Panc1 (cell line): ENCODE measurements at regions of chr4 and their contacts with region 1.

Region 1: DNA sequence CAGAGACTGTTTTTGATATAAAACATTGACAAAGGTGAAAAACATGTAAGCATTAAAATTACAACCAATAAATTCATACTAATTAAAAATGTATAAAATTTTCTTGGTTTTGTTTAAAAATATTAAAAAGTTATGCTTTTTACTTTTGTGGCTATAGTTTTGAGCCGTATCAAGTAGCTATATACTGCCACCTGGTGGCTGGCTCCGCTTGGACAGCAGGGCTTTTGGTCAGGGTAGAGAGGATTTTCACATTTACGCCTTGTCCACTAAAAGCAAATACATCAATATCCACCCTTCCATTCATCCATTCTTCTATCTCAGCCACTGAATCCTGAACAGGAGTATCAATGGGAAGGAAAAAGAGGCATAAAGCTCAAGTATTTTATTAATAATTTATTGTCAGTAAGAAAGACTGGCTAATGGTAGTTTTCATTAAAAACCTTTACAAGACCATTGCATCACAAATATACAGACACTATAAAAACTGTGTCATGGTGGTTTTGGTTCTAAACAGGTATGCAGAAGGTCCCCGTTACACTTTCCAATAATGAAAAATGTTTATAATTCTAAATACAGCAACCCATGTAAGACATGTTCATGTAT is 32.1 kb upstream of the MTNR1A start:
- DNase-seq: peak; percentile 12
- ATAC-seq: peak; percentile 81; the same call in 1 of the 2 replicates
- H3K4me3 ChIP-seq: no peak overlapping the region
- H3K27ac ChIP-seq: no peak overlapping the region
- H3K4me1 ChIP-seq: no peaks in the 10 kb centered on the region; the same call in 1 of the 2 replicates
- H3K27me3 ChIP-seq: no peaks in the 10 kb centered on the region
- CTCF ChIP-seq: peak; percentile 79

Region 2: GRCh38 chr4:186297013-186297645 is 290.4 kb before region 1 on chr4:
- CTCF ChIA-PET with region 1: no interaction called
- POLR2A ChIA-PET with region 1: no interaction called
- in situ Hi-C with region 1: no loop called
- intact Hi-C with region 1: loop called (anchors 1 kb)
- DNase-seq: peak; percentile 41
- ATAC-seq: no peak; the same call in 1 of the 2 replicates
- H3K4me3 ChIP-seq: no peak overlapping the region
- H3K27ac ChIP-seq: no peak overlapping the region
- H3K4me1 ChIP-seq: no peaks in the 10 kb centered on the region
- H3K27me3 ChIP-seq: no peaks in the 10 kb centered on the region
- CTCF ChIP-seq: peak; percentile 65; the same call in 1 of the 2 replicates

Region 3: DNA sequence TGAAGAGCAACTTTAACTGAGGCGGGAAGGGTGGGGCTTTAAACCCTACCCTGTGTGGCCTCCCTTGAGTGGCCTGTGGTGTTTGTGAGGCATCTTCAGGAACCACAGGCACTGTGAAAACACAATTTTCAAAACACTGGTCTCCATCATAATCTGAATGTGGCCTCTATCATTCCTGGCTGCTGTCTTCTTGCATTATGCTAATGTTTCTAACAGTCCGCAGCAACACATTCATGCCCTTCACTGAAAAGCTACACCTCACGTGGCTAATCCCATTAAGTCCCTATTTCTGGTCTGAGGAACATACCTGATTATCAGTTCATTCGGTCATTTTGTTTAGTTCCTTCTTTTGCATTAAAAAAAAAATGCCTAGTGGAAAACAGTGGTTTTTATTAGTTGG is 227.0 kb before region 1 on chr4:
- CTCF ChIA-PET with region 1: no interaction called
- POLR2A ChIA-PET with region 1: no interaction called
- in situ Hi-C with region 1: no loop called
- intact Hi-C with region 1: no loop called
- DNase-seq: no peak
- ATAC-seq: no peak
- H3K4me3 ChIP-seq: no peak overlapping the region
- H3K27ac ChIP-seq: no peak overlapping the region
- H3K4me1 ChIP-seq: no peaks in the 10 kb centered on the region
- H3K27me3 ChIP-seq: no peaks in the 10 kb centered on the region
- CTCF ChIP-seq: no peak

Region 4: GRCh38 chr4:186472948-186473347 is 114.6 kb before region 1 on chr4:
- CTCF ChIA-PET with region 1: no interaction called
- POLR2A ChIA-PET with region 1: no interaction called
- in situ Hi-C with region 1: no loop called
- intact Hi-C with region 1: loop called (anchors 10 kb)
- DNase-seq: no peak
- ATAC-seq: no peak
- H3K4me3 ChIP-seq: no peak overlapping the region
- H3K27ac ChIP-seq: no peak overlapping the region
- H3K4me1 ChIP-seq: no peaks in the 10 kb centered on the region
- H3K27me3 ChIP-seq: peaks cover 2% of the 10 kb centered on the region; the same call in 1 of the 2 replicates
- CTCF ChIP-seq: peak; percentile 70